Activated CD4-positive, alpha-beta T cell treated with anti-CD3 and anti-CD28 coated beads, Interleukin-2, amount 10 ng/mL, durations not matched to agents 24 days and 14 days (primary cell): ENCODE measurements at regions of chr12 and their contacts with region 1.

Region 1: GRCh38 chr12:12474931-12475795 is 87.5 kb downstream of the DUSP16 start:
- DNase-seq: peak; percentile 90
- H3K4me3 Mint-ChIP-seq: peak overlapping the region; percentile 78
- H3K27ac Mint-ChIP-seq: peak overlapping the region; percentile 100
- H3K4me1 Mint-ChIP-seq: peaks cover 59% of the 10 kb centered on the region
- H3K27me3 Mint-ChIP-seq: no peaks in the 10 kb centered on the region

Region 2: GRCh38 chr12:12428916-12429647 is 46.1 kb before region 1 on chr12:
- intact Hi-C with region 1: loop called (anchors 2 kb)
- DNase-seq: no peak
- H3K4me3 Mint-ChIP-seq: no peak overlapping the region
- H3K27ac Mint-ChIP-seq: peak overlapping the region; percentile 70
- H3K4me1 Mint-ChIP-seq: peaks cover 45% of the 10 kb centered on the region
- H3K27me3 Mint-ChIP-seq: no peaks in the 10 kb centered on the region

Region 3: DNA sequence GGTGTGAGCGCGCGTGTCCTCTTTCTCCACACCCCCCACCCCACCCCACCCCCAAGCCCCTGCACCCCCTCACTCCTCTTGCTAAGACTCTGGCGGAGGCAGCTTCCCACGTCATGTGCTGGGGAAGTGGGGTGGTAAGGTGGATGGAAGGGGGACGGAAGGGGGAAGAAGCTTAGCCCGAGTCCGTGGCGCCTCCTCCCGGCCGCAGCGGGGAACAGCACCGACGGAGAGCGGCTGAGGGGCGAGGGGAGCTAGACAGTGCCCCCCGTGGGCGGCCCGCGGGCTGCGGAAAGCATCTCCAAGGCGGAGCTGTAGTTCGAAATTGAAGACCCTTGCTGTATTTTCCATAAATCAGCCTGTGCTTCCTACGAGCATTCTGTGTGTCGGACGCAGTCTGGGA is 1506.8 kb after region 1 on chr12:
- intact Hi-C with region 1: no loop called
- DNase-seq: no peak
- H3K4me3 Mint-ChIP-seq: no peak overlapping the region
- H3K27ac Mint-ChIP-seq: no peak overlapping the region
- H3K4me1 Mint-ChIP-seq: no peaks in the 10 kb centered on the region
- H3K27me3 Mint-ChIP-seq: peaks cover 52% of the 10 kb centered on the region